ENCODE measurements at regions of chr3 and their contacts with region 1.

Region 1: DNA sequence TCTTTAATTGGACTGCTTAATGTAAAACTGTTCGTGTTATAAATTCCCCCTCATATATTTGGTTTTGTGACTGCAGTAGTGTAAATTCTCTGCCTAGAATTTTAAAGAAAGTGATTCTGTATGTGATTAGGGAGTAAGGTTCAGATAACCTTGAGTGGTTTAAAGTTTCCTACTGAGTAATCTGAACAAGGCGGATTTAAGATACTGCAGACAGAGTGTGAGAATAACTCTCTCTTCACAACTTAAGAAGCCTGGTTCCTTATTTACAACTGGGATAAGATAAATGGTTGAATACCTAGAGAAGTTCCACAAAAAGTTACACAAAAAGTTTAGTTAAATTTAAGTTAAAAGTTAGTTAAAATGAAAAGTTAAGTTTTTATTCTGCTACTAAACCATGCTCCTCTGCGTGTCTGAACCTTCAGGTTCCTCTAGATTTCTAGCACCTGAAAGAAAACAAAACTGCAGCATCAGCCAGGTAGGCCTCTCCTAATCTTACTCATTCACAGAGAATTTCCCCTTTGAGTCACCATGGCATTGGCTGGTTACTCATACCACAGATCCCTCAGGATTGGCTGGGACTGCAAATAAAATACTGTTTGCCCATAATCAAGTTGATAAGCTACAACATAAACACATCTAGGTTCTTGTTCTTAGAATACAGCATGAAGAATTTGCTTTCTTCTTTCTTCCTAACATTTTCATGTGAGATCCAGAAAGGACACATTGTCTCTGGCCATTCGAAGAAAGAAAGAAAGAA is at the start of gene ARL14:
- DNase-seq: peak; percentile 48
- H3K4me3 ChIP-seq: peak within 1 kb of the TSS; percentile 3 to 52 (median 30)
- H3K27ac ChIP-seq: peak within 1 kb of the TSS; percentile 86 to 88 (median 86)
- H3K4me1 ChIP-seq: peaks cover 0 to 52% (median 15%) of the 10 kb centered on the region in 4 donors
- H3K27me3 ChIP-seq: no peaks in the 10 kb centered on the region
- CTCF ChIP-seq: no peak
- EP300 ChIP-seq: no peak
- POLR2A ChIP-seq: peak; percentile 91
- total RNA-seq, gene ARL14: 2.0 to 47.1 (median 27.8) TPM

Region 2: DNA sequence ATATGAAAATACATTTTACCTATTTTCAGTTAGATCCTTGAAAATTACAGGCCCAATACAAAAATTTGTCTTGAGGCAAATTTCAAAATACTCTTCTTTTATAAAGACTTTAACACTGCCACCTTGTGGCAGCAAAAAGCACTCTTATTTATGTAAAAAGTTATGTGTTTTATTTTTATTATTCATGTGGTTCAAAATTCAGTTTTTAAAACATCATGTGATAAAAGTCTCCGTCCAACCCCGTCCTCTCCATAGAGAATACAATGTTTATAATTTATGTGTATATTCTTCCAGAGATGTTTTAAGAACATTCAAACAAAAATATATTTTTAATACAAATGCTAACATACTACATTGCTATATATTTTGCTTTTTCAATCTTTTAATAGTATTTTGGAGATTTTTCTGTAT is 190.3 kb before region 1 on chr3:
- in situ Hi-C with region 1: no loop called
- intact Hi-C with region 1: no loop called
- DNase-seq: no peak
- H3K4me3 ChIP-seq: no peak overlapping the region
- H3K27ac ChIP-seq: no peak overlapping the region
- H3K4me1 ChIP-seq: peaks cover 0 to 5% (median 0%) of the 10 kb centered on the region in 4 donors
- H3K27me3 ChIP-seq: no peaks in the 10 kb centered on the region
- CTCF ChIP-seq: peak; percentile 28 to 71 (median 55)
- EP300 ChIP-seq: no peak
- POLR2A ChIP-seq: no peak

Region 3: DNA sequence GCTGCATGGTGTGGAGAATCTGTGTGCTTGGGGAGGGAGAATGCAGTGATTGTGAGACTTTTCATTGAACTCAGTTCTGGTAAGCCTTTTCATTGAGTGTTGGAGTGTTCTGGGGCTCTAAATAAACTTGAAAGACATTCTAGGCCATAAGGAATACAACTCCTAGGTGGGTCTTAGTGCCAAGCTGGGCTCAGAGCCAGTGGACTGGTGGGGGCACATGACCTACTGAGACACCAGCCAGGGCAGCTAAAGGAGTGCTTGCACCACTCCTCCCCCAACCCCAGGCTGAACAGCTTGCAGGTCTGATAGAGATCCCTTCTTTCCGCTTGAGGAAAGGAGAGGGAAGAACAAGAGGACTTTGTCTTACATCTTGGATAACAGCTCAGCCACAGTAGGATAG is 89.6 kb before region 1 on chr3:
- in situ Hi-C with region 1: no loop called
- intact Hi-C with region 1: loop called (anchors 10 kb)
- DNase-seq: no peak
- H3K4me3 ChIP-seq: no peak overlapping the region
- H3K27ac ChIP-seq: no peak overlapping the region
- H3K4me1 ChIP-seq: no peaks in the 10 kb centered on the region
- H3K27me3 ChIP-seq: no peaks in the 10 kb centered on the region
- CTCF ChIP-seq: no peak
- EP300 ChIP-seq: no peak
- POLR2A ChIP-seq: no peak

Region 4: DNA sequence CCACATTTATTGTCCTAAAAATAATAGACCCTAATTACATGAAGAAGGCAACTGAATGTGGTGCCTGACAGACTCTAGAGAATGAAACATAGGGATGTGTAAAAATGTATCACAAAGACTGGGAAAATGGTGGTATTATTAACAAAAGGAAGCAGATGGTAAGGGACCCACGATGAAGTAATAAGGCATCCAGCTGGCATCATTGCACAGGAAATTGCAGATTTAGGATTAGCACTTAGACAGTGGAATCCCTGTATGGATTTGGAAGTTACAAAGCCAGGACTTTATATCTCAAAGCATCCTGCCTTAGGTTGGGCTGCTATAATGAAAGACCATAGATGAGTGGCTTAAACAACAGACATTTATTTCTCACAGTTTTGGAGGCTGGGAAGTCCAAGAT is 183.6 kb after region 1 on chr3:
- in situ Hi-C with region 1: no loop called
- intact Hi-C with region 1: no loop called
- DNase-seq: no peak
- H3K4me3 ChIP-seq: no peak overlapping the region
- H3K27ac ChIP-seq: no peak overlapping the region
- H3K4me1 ChIP-seq: no peaks in the 10 kb centered on the region
- H3K27me3 ChIP-seq: no peaks in the 10 kb centered on the region
- CTCF ChIP-seq: no peak
- EP300 ChIP-seq: no peak
- POLR2A ChIP-seq: no peak

Measured in transverse colon (tissue), 4 donors.